ENCODE measurements at regions of chr5 and their contacts with region 1.

Region 1: GRCh38 chr5:177357459-177358351 is at the start of gene RGS14:
- DNase-seq: peak; percentile 90
- ATAC-seq: peak; percentile 88
- H3K4me3 ChIP-seq: peak within 1 kb of the TSS; percentile 74 to 96 (median 92)
- H3K4me3 Mint-ChIP-seq: peak within 1 kb of the TSS; percentile 87
- H3K27ac ChIP-seq: peak within 1 kb of the TSS; percentile 62 to 80
- H3K27ac Mint-ChIP-seq: peak within 1 kb of the TSS; percentile 95
- H3K4me1 ChIP-seq: peaks cover 56 to 63% of the 10 kb centered on the region in 2 donors
- H3K4me1 Mint-ChIP-seq: peaks cover 76% of the 10 kb centered on the region
- H3K27me3 ChIP-seq: no peaks in the 10 kb centered on the region
- H3K27me3 Mint-ChIP-seq: no peaks in the 10 kb centered on the region
- CTCF ChIP-seq: no peak
- total RNA-seq, gene RGS14: 85.8 and 92.6 TPM in 2 replicates

Region 2: GRCh38 chr5:176700239-176700847 is 657.4 kb before region 1 on chr5:
- CTCF ChIA-PET with region 1: no interaction called
- POLR2A ChIA-PET with region 1: no interaction called
- intact Hi-C with region 1: no loop called
- DNase-seq: no peak
- ATAC-seq: no peak
- H3K4me3 ChIP-seq: no peak overlapping the region
- H3K4me3 Mint-ChIP-seq: no peak overlapping the region
- H3K27ac ChIP-seq: no peak overlapping the region
- H3K27ac Mint-ChIP-seq: no peak overlapping the region
- H3K4me1 ChIP-seq: no peaks in the 10 kb centered on the region
- H3K4me1 Mint-ChIP-seq: no peaks in the 10 kb centered on the region
- H3K27me3 ChIP-seq: peaks cover 0 to 31% (median 4%) of the 10 kb centered on the region in 4 experiments
- H3K27me3 Mint-ChIP-seq: peaks cover 66% of the 10 kb centered on the region
- CTCF ChIP-seq: no peak

Region 3: DNA sequence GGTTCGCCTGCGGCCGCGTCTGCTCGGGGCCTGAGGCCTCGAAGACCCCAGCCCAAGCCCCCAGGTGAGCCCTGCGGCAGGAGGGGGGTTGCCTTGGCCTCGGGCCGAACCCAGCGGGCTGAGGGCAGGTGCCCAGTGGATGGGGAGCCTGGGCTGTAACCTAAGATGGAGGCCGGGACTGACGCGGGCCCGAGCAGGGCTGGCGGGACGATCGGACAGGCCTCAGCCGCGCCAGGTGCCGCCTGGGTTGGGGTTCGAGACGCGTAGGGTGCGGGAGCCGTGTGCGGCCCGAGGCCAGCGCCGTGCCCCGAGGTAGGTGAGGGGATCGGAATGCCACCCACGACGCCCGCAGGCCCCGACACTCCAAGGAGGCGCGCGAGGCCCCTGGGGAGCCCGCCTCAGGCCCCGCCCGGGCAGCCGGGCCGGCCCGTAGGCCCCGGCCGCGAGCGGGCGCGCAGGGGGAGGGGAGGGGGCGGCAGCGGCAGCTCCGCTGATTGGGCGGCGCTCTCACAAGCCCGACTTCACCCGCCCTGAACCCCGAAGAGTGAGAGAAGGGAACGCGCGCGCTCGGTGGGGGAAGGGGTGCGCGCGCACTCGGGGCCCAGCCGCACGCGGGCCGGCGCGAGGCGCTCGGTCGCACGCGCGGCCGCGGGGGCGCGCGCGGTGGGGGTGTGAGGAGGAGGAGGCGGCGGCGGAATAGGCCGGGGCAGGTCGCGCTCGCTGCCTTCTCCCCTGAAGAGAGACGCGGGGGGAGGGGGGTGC is 224.4 kb before region 1 on chr5 and contains the start of gene NSD1:
- CTCF ChIA-PET with region 1: no interaction called
- POLR2A ChIA-PET with region 1: no interaction called
- intact Hi-C with region 1: loop called (anchors 2 kb)
- DNase-seq: peak; percentile 97
- ATAC-seq: peak; percentile 79
- H3K4me3 ChIP-seq: peak within 1 kb of the TSS; percentile 65 to 80 (median 74)
- H3K4me3 Mint-ChIP-seq: peak within 1 kb of the TSS; percentile 86
- H3K27ac ChIP-seq: peak within 1 kb of the TSS; percentile 91 to 92
- H3K27ac Mint-ChIP-seq: peak within 1 kb of the TSS; percentile 96
- H3K4me1 ChIP-seq: peaks cover 33 to 50% of the 10 kb centered on the region in 2 donors
- H3K4me1 Mint-ChIP-seq: peaks cover 45% of the 10 kb centered on the region
- H3K27me3 ChIP-seq: no peaks in the 10 kb centered on the region
- H3K27me3 Mint-ChIP-seq: no peaks in the 10 kb centered on the region
- CTCF ChIP-seq: no peak
- total RNA-seq, gene NSD1: 145 and 152 TPM in 2 replicates

Region 4: GRCh38 chr5:177370488-177371119 is 12.9 kb after region 1 on chr5:
- CTCF ChIA-PET with region 1: interaction called, 60 read pairs
- POLR2A ChIA-PET with region 1: interaction called, 8 read pairs
- intact Hi-C with region 1: loop called (anchors 2 kb)
- DNase-seq: peak; percentile 63
- ATAC-seq: peak; percentile 75
- H3K4me3 ChIP-seq: peak overlapping the region in 1 of 5 experiments; percentile 42
- H3K4me3 Mint-ChIP-seq: peak overlapping the region; percentile 63
- H3K27ac ChIP-seq: no peak overlapping the region
- H3K27ac Mint-ChIP-seq: no peak overlapping the region
- H3K4me1 ChIP-seq: peaks cover 35 to 38% of the 10 kb centered on the region in 2 donors
- H3K4me1 Mint-ChIP-seq: peaks cover 42% of the 10 kb centered on the region
- H3K27me3 ChIP-seq: no peaks in the 10 kb centered on the region
- H3K27me3 Mint-ChIP-seq: no peaks in the 10 kb centered on the region
- CTCF ChIP-seq: peak; percentile 33

Region 5: GRCh38 chr5:177509381-177509951 is 151.8 kb after region 1 on chr5 and contains the start of gene DOK3:
- CTCF ChIA-PET with region 1: no interaction called
- POLR2A ChIA-PET with region 1: no interaction called
- intact Hi-C with region 1: loop called (anchors 1 kb)
- DNase-seq: peak; percentile 81
- ATAC-seq: peak; percentile 39
- H3K4me3 ChIP-seq: peak within 1 kb of the TSS; percentile 57 to 95 (median 75)
- H3K4me3 Mint-ChIP-seq: peak within 1 kb of the TSS; percentile 94
- H3K27ac ChIP-seq: peak within 1 kb of the TSS; percentile 91 to 96
- H3K27ac Mint-ChIP-seq: peak within 1 kb of the TSS; percentile 98
- H3K4me1 ChIP-seq: peaks cover 38 to 53% of the 10 kb centered on the region in 2 donors
- H3K4me1 Mint-ChIP-seq: peaks cover 55% of the 10 kb centered on the region
- H3K27me3 ChIP-seq: no peaks in the 10 kb centered on the region
- H3K27me3 Mint-ChIP-seq: no peaks in the 10 kb centered on the region
- CTCF ChIP-seq: no peak
- total RNA-seq, gene DOK3: 113 and 115 TPM in 2 replicates

Region 6: DNA sequence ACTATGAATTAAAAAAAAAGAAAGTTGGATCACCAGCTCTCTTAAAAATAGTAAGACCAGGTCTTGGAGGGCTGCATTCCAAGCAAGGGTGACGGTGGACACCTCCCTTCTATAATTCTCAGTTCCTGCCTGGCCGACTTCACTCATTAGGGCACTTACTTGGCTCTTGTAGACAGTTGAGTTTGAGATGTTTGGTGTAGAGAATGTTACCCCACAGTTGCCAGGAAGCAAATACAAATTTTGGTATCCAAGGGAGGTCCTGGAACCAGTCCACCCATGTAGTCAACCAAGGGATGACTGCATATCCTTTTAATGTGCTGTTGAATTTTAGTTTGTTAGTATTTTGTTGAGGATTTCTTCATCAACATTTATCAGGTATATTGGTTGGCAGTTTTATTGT is 262.9 kb after region 1 on chr5:
- CTCF ChIA-PET with region 1: no interaction called
- POLR2A ChIA-PET with region 1: no interaction called
- intact Hi-C with region 1: no loop called
- DNase-seq: no peak
- ATAC-seq: no peak
- H3K4me3 ChIP-seq: no peak overlapping the region
- H3K4me3 Mint-ChIP-seq: no peak overlapping the region
- H3K27ac ChIP-seq: no peak overlapping the region
- H3K27ac Mint-ChIP-seq: no peak overlapping the region
- H3K4me1 ChIP-seq: no peaks in the 10 kb centered on the region
- H3K4me1 Mint-ChIP-seq: no peaks in the 10 kb centered on the region
- H3K27me3 ChIP-seq: no peaks in the 10 kb centered on the region
- H3K27me3 Mint-ChIP-seq: no peaks in the 10 kb centered on the region
- CTCF ChIP-seq: no peak